Transverse colon (tissue), 4 donors: ENCODE measurements at regions of chr12 and their contacts with region 1.

Region 1: DNA sequence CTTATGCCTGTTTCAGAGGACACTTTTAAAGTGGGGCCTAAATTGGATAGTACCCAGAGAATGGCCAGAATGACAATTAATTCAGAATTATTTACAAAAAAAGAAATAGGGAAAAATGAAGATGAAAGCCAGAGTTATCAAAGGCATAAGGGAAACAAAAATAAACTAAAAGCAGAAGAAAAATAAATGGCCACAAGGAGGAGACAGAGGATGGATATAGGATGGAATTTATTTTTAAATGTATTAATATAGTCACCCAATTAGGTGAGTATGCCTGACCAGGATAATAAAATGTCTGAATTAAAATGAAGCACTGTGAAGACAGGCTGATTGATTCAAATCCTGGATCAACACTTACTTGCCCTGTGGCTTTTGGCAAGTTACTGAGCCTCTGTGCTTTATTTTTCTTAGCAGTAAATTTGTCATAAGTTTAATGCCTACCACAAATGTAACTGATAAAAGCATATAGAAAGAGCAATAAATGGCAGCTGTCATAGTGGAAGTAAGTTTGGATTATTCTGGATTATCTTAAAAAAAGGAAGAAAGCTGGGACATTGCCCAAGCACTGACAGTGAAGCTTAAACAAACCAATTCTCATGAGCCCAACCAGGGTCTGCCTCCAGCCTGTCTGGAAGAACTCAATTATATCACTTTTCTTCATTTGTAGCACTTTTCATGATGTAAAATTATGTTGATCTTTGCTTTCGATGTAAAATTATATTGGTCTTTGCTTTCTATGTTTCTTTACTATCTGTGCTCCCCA is 3.5 kb downstream of the CLEC9A start:
- DNase-seq: no peak
- H3K4me3 ChIP-seq: no peak overlapping the region
- H3K27ac ChIP-seq: no peak overlapping the region
- H3K4me1 ChIP-seq: no peaks in the 10 kb centered on the region
- H3K27me3 ChIP-seq: no peaks in the 10 kb centered on the region
- CTCF ChIP-seq: peak; percentile 34 to 41 (median 35)
- EP300 ChIP-seq: no peak
- POLR2A ChIP-seq: no peak

Region 2: GRCh38 chr12:9149372-9149771 is 884.6 kb before region 1 on chr12:
- in situ Hi-C with region 1: no loop called
- intact Hi-C with region 1: loop called (anchors 5 kb)
- DNase-seq: no peak
- H3K4me3 ChIP-seq: no peak overlapping the region
- H3K27ac ChIP-seq: no peak overlapping the region
- H3K4me1 ChIP-seq: no peaks in the 10 kb centered on the region
- H3K27me3 ChIP-seq: no peaks in the 10 kb centered on the region
- CTCF ChIP-seq: no peak
- EP300 ChIP-seq: no peak
- POLR2A ChIP-seq: no peak

Region 3: GRCh38 chr12:9792961-9793617 is 240.9 kb before region 1 on chr12:
- in situ Hi-C with region 1: no loop called
- intact Hi-C with region 1: no loop called
- DNase-seq: no peak
- H3K4me3 ChIP-seq: no peak overlapping the region
- H3K27ac ChIP-seq: no peak overlapping the region
- H3K4me1 ChIP-seq: peaks cover 0 to 6% (median 0%) of the 10 kb centered on the region in 4 donors
- H3K27me3 ChIP-seq: no peaks in the 10 kb centered on the region
- CTCF ChIP-seq: no peak
- EP300 ChIP-seq: no peak
- POLR2A ChIP-seq: no peak

Region 4: GRCh38 chr12:9999016-9999415 is 34.9 kb before region 1 on chr12 and contains the start of gene CLEC1B:
- in situ Hi-C with region 1: loop called in 1 of 4 experiments (anchors 5 kb)
- intact Hi-C with region 1: no loop called
- DNase-seq: no peak
- H3K4me3 ChIP-seq: no peak within 1 kb of the TSS
- H3K27ac ChIP-seq: no peak within 1 kb of the TSS
- H3K4me1 ChIP-seq: no peaks in the 10 kb centered on the region
- H3K27me3 ChIP-seq: no peaks in the 10 kb centered on the region
- CTCF ChIP-seq: no peak
- EP300 ChIP-seq: no peak
- POLR2A ChIP-seq: no peak
- total RNA-seq, gene CLEC1B: not detected

Region 5: GRCh38 chr12:10052193-10052913 is 18.4 kb after region 1 on chr12:
- in situ Hi-C with region 1: no loop called
- intact Hi-C with region 1: no loop called
- DNase-seq: no peak
- H3K4me3 ChIP-seq: no peak overlapping the region
- H3K27ac ChIP-seq: no peak overlapping the region
- H3K4me1 ChIP-seq: no peaks in the 10 kb centered on the region
- H3K27me3 ChIP-seq: no peaks in the 10 kb centered on the region
- CTCF ChIP-seq: no peak
- EP300 ChIP-seq: no peak
- POLR2A ChIP-seq: no peak

Region 6: GRCh38 chr12:10067942-10068341 is 34.0 kb after region 1 on chr12:
- in situ Hi-C with region 1: no loop called
- intact Hi-C with region 1: no loop called
- DNase-seq: no peak
- H3K4me3 ChIP-seq: no peak overlapping the region
- H3K27ac ChIP-seq: peak overlapping the region in 3 of 4 donors; percentile 8 to 56 (median 51)
- H3K4me1 ChIP-seq: peaks cover 0 to 6% (median 2%) of the 10 kb centered on the region in 4 donors
- H3K27me3 ChIP-seq: no peaks in the 10 kb centered on the region
- CTCF ChIP-seq: no peak
- EP300 ChIP-seq: no peak
- POLR2A ChIP-seq: no peak

Region 7: DNA sequence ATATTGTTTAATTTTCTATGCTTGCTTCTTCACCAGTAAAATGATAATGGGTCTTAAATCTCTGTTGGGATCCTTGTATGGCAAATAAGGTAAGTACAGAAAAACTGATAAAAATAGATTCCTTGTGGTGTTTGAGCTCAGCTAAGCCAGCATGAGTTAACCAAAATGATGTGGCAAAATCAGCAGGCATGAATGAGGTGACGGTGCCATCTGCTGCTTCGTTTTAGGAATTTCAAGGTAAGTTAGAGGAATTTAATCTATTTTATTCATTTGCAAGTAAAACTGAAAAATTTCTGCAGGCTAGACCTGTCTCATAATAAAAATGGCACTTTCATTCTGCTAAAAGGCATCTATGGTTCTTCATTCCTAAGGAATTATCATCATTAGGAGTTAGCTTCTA is 106.0 kb after region 1 on chr12:
- in situ Hi-C with region 1: loop called in 1 of 4 experiments (anchors 25 kb)
- intact Hi-C with region 1: loop called (anchors 5 kb)
- DNase-seq: no peak
- H3K4me3 ChIP-seq: no peak overlapping the region
- H3K27ac ChIP-seq: no peak overlapping the region
- H3K4me1 ChIP-seq: no peaks in the 10 kb centered on the region
- H3K27me3 ChIP-seq: no peaks in the 10 kb centered on the region
- CTCF ChIP-seq: peak in 4 of 5 experiments; percentile 34 to 52 (median 38)
- EP300 ChIP-seq: no peak
- POLR2A ChIP-seq: no peak